ENCODE measurements at regions of chr11 and their contacts with region 1.

Region 1: DNA sequence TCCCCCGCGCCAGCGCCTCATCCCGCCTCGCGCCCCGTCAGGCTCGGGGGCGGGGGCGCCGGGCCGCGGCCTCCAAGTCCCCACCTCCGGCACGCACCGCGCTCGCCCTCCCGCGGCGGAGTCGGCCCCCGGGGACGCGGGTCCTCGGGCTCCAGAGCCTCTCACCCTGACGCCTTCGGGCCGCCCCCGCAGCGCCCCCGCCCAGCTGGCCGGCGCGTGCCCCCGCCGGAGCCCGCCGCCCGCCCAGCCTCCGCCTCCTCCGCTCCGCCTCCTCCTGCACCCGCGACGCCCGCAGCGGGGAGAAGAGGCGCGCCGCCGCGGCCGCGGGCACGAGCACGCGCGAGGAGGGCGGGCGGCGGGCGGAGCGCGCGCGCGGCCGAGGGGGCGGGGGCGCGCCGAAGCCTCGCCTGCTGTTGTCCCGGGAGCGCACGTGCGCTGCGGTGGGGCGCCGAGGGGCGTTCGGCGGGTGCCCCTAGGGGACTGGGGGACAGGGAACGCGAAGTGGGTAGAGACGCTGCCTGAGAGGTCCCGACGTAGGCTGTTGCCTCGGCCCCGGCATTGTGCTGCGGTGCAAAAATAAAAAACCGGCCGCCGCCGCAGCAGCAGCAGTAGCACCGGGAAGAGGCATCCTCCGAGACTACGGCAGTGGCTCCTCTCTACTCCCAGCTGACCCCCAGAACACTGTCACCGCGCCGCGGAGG is 87.4 kb upstream of the ARHGAP32 start:
- DNase-seq: peak; percentile 23
- H3K4me3 ChIP-seq: peak overlapping the region; percentile 64
- CTCF ChIP-seq: no peak

Region 2: GRCh38 chr11:129117595-129118350 is 161.7 kb before region 1 on chr11:
- in situ Hi-C with region 1: loop called (anchors 25 kb)
- DNase-seq: peak; percentile 64
- H3K4me3 ChIP-seq: no peak overlapping the region
- CTCF ChIP-seq: peak; percentile 86

Region 3: GRCh38 chr11:129163714-129164164 is 115.7 kb before region 1 on chr11:
- in situ Hi-C with region 1: no loop called
- DNase-seq: no peak
- H3K4me3 ChIP-seq: no peak overlapping the region
- CTCF ChIP-seq: no peak

Region 4: GRCh38 chr11:129208863-129209262 is 70.6 kb before region 1 on chr11:
- in situ Hi-C with region 1: no loop called
- DNase-seq: no peak
- H3K4me3 ChIP-seq: no peak overlapping the region
- CTCF ChIP-seq: no peak

Measured in astrocyte of the cerebellum (primary cell).